Activated CD8-positive, alpha-beta T cell treated with anti-CD3 and anti-CD28 coated beads, Interleukin-2, amount 10 ng/mL, durations not matched to agents 7 days and 5 days (primary cell): ENCODE measurements at regions of chr5 and their contacts with region 1.

Region 1: DNA sequence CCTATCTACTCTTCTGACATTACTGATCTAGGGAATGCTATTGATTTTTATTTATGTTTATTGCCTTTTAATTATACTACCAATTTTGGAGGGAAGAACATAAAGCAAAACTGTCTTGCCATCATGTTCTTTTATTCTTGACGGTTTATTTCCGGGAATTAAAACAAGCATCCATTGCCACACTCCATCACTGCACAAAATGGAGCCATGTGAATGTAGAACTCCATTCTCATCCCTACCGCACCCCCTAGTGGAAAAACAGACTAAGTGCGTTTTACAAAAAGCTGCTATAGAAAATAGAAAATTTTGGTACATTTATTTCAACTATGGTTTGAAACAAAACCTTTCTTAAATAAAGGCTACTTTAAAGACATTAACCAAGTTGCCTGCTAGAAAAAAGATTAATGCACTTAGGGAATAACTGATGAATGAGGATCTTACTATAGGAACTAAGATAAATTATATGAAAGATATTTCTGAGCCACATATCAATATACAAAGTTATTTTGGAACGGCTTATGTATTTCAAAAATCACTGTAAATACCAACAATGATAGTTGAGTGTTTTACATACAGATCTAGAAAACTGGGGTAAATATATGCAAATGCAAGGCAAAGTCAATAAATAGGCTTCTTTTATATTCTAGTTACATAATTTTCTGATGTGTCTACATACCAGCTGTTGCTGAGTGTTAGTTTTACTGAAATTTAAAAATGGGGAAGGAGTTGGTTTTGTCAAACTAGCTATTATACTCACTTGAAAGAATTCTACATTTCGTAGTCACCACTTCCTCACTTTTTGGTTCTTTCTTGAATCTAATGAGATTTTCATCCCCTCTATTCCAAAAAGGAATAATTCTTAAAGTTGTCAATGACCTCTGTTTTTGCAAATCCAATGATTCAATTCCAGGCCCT is 26.5 kb downstream of the OXCT1 start:
- DNase-seq: peak; percentile 51
- ATAC-seq: peak; percentile 58
- H3K4me3 Mint-ChIP-seq: no peak overlapping the region
- H3K27ac Mint-ChIP-seq: no peak overlapping the region
- H3K4me1 Mint-ChIP-seq: no peaks in the 10 kb centered on the region
- H3K27me3 Mint-ChIP-seq: no peaks in the 10 kb centered on the region

Region 2: GRCh38 chr5:40904205-40904993 is 939.3 kb before region 1 on chr5:
- CTCF ChIA-PET with region 1: interaction called, 13 read pairs
- POLR2A ChIA-PET with region 1: no interaction called
- DNase-seq: peak; percentile 50
- ATAC-seq: no peak
- H3K4me3 Mint-ChIP-seq: no peak overlapping the region
- H3K27ac Mint-ChIP-seq: no peak overlapping the region
- H3K4me1 Mint-ChIP-seq: no peaks in the 10 kb centered on the region
- H3K27me3 Mint-ChIP-seq: peaks cover 7% of the 10 kb centered on the region

Region 3: DNA sequence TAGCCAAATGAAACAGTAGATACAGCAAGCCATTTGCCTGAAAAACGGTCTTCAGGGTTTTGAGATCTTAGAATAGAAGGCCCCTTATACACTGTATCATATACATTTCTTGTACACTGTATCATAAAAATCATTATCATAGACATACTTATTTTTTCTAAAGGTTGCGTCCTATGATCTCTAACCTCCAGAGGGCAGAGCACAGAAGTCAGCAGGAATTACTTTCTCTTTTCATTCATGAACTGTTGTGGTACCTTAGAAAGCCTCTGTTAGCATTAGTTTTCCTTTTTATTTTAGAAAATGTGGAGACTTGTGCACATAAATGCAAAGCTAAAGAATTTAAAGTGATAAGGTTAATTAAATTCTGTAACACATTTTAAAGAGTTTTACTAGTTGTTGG is 88.9 kb before region 1 on chr5:
- CTCF ChIA-PET with region 1: interaction called, 19 read pairs
- POLR2A ChIA-PET with region 1: no interaction called
- DNase-seq: no peak
- ATAC-seq: no peak
- H3K4me3 Mint-ChIP-seq: no peak overlapping the region
- H3K27ac Mint-ChIP-seq: no peak overlapping the region
- H3K4me1 Mint-ChIP-seq: no peaks in the 10 kb centered on the region
- H3K27me3 Mint-ChIP-seq: no peaks in the 10 kb centered on the region